A549 (cell line): ENCODE measurements at regions of chr5 and their contacts with region 1.

Region 1: DNA sequence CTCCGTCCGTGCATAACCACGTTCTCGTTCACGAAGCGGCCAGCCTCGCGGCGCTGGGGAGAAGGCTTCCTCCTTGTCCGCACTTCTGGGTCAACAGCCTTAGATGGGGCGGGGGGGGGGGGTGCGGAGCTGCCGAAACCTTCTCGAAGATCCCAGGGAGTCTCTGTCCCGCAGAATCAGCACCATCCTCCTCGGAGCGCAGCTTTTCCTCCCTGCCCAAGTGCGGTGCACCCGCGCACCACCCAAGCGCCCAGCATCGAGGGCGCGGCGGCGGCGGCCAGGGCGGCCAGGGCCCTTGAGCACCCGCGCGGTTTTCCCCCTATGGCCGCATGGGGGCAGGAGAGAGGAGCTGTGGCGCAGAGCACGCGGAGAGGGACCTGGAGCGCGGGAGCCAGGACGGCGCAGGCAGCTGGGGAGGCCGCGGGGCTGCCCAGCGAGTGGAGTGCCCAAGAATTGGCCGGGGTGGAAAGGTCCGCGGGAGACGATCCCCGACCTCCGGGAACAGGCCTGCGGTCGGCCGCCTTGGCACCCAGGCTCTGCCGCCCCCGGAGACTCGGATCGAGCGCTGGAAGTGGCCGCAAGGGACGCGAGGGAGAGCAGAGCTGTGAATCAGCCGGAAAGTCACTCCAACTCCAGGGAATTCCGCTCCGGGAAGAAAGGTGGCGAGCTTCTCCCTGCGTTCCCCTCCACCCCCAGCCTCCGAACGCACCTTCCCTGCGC is 43.1 kb downstream of the TMEM174 start:
- DNase-seq: peak; percentile 87 to 89
- ATAC-seq: peak; percentile 93 to 97
- H3K4me3 ChIP-seq: peak overlapping the region; percentile 47
- H3K27ac ChIP-seq: peak overlapping the region; percentile 91 to 96
- H3K4me1 ChIP-seq: peaks cover 16% of the 10 kb centered on the region; the same call in 2 of the 3 replicates
- CTCF ChIP-seq: peak; percentile 82
- EP300 ChIP-seq: no peak
- POLR2A ChIP-seq: peak; percentile 56
- RAD21 ChIP-seq: peak; percentile 60 to 79

Region 2: DNA sequence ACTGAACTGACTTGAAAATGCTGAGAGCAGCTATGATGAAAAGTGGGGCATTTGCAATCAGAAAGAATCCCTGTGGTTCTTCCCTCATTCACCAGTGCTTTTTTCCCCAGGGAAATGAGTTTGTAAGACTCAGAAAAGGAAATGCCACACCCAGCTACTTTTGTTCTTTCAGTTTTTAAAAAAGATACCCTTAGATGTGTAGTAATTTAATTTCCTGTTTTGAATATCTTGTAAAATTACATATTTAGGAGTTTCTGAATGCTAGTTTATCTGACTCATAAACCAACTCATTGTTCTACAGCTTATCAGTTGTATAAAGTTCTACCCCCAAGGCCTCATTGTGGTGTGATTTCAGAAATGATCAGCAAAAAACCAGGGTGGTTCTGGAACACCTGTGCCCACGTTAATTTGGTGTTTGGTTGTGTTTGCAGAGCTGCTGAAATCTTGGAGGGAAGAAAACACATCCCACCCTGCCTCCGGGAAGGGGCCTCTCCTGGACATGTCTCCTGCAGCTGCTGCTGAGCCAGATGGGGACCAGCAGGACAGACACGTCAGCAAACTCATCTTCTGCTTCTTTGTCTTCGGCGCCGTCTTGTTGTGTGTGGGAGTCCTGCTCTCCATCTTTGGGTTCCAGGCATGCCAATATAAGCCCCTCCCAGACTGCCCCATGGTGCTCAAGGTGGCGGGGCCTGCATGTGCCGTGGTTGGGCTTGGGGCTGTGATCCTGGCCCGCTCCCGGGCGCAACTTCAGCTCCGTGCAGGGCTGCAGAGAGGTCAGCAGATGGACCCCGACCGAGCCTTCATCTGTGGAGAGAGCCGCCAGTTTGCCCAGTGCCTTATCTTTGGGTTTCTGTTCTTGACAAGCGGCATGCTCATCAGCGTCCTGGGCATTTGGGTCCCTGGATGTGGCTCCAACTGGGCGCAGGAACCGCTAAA is 92.9 kb before region 1 on chr5:
- CTCF ChIA-PET with region 1: interaction called, 10 read pairs
- POLR2A ChIA-PET with region 1: no interaction called
- DNase-seq: no peak
- ATAC-seq: no peak
- H3K4me3 ChIP-seq: no peak overlapping the region
- H3K27ac ChIP-seq: no peak overlapping the region
- H3K4me1 ChIP-seq: peaks cover 17% of the 10 kb centered on the region
- CTCF ChIP-seq: no peak
- EP300 ChIP-seq: no peak
- POLR2A ChIP-seq: no peak
- RAD21 ChIP-seq: no peak

Region 3: DNA sequence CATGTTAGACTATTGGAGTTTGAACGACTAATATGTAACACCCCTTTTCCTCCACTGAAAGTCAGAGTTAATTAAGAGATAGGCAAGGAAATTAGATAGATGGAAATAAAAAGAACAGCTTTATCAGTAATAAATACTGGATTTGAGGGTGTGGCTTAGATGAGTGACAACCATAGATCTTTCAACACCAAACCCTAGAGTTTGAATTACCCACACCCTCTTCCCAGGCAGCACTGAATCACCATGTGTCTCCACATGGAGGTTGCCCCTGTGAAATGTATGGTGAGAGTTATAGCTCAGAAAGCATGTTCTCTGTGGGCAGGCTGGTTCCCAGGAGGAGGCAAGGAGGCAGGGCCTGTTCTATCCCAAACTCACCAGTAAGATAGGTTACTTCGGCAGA is 26.7 kb after region 1 on chr5:
- CTCF ChIA-PET with region 1: interaction called, 10 read pairs
- POLR2A ChIA-PET with region 1: no interaction called
- DNase-seq: no peak
- ATAC-seq: no peak
- H3K4me3 ChIP-seq: no peak overlapping the region
- H3K27ac ChIP-seq: no peak overlapping the region
- H3K4me1 ChIP-seq: no peaks in the 10 kb centered on the region
- CTCF ChIP-seq: no peak
- EP300 ChIP-seq: no peak
- POLR2A ChIP-seq: no peak
- RAD21 ChIP-seq: no peak

Region 4: DNA sequence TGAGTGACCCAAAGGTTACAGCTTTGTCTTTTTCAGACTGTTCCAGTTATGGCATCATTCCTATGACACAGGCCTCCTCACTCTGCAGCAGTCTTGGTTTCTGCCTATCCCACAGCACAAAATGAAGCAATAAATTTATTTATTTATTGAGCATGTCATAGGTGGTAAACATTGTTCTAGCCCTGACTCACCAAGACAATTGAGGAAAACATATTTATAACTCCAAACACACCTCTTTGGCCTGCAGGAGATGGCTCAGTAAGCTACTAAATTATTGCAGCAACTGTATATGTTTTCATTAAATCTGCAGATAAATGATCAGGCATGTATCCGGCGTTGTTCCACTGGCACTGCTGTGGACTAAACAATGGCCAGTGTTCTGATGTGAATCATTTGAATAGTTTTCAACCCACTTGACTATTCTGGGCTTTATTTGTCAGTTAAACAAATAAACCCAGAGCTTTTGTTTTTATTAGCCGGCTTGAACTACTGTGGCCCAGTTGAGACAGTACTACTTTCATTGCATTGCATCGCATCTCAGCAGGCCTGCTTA is 149.3 kb after region 1 on chr5:
- CTCF ChIA-PET with region 1: interaction called, 37 read pairs
- POLR2A ChIA-PET with region 1: no interaction called
- DNase-seq: peak; percentile 25 to 49
- ATAC-seq: peak; percentile 81 to 85
- H3K4me3 ChIP-seq: no peak overlapping the region
- H3K27ac ChIP-seq: peak overlapping the region; percentile 46 to 71; a peak in 5 of 6 replicates
- H3K4me1 ChIP-seq: peaks cover 35% of the 10 kb centered on the region
- CTCF ChIP-seq: no peak
- EP300 ChIP-seq: peak in 1 of 2 experiments; percentile 35; a peak in 1 of 5 replicates
- POLR2A ChIP-seq: no peak
- RAD21 ChIP-seq: no peak

Region 5: DNA sequence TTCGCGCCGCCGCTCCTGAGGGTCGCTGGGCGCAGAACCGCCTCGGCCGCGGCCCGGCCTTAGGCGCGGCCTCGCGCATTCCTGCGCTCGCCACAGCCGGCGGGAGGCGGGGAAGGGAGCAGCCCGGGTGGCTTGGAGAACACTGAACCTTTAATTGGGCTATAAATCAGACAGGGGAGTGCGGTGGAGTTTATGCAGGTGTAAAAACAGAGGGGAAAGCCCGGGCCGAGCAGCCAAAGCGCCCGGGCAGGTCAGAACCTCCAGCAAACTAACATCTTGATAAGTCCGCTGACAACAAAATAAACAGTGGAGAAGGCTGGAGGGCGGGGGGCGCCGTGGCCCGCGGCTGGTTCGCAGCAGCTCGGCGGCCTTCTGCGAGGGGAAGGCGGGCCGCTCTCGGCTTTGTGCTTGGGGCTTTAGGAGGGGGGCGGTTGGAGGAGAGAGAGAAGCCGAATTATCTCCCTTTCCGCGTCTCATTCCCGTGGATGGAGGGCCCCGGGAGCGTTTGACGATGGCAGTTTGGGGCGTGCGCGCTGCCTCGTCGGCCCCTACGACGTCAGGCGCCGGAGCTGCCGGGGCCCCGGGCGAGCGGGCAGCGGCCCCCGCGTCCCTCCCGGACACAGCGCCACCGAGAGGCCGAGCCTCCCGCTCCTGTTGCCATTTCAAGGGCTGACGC is 221.2 kb after region 1 on chr5:
- CTCF ChIA-PET with region 1: interaction called, 34 read pairs
- POLR2A ChIA-PET with region 1: interaction called, 6 read pairs
- DNase-seq: peak; percentile 79 to 88
- ATAC-seq: peak; percentile 93 to 97
- H3K4me3 ChIP-seq: peak overlapping the region; percentile 45
- H3K27ac ChIP-seq: peak overlapping the region; percentile 68 to 86
- H3K4me1 ChIP-seq: peaks cover 11% of the 10 kb centered on the region
- CTCF ChIP-seq: peak; percentile 76
- EP300 ChIP-seq: no peak
- POLR2A ChIP-seq: no peak
- RAD21 ChIP-seq: peak; percentile 47 to 70; a peak in 4 of 5 replicates

Region 6: DNA sequence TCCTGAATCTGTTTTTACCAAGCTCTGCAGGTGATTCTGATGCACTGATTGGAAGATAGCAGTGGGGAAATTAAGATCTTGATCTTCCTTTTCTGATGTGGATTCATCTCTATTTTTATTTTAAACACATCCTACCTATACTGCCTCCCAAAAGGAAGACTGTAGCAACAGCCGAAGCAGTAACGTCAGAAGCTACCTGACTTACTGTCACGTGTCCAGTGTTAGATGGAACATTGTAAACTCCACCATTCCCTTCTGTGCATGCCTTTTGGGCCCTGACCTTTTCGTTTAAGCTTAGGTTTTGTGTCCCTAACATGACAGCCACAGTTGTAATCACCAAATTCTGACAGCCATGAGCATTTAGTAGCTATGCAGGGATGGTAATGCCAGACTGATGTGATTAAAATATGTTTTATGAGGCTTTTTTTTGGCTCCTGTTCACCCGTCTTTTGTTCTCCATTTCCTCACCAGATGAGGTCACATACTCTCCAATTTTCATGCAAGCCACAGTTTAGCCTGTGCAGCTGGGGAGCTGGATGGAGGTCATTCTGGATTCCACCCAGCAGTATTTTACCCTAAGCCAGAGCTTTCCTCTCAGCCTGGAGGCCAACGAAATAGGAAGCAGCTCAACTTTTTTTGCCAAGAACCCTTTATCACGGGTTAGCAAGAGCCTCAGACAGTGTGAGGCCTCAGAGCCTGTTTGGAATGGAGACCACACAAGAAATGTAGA is 248.1 kb after region 1 on chr5:
- CTCF ChIA-PET with region 1: interaction called, 17 read pairs
- POLR2A ChIA-PET with region 1: no interaction called
- DNase-seq: no peak
- ATAC-seq: no peak
- H3K4me3 ChIP-seq: no peak overlapping the region
- H3K27ac ChIP-seq: no peak overlapping the region
- H3K4me1 ChIP-seq: no peaks in the 10 kb centered on the region
- CTCF ChIP-seq: no peak
- EP300 ChIP-seq: no peak
- POLR2A ChIP-seq: no peak
- RAD21 ChIP-seq: no peak